Lower leg skin (tissue), 4 donors: ENCODE measurements at regions of chr11 and their contacts with region 1.

Region 1: DNA sequence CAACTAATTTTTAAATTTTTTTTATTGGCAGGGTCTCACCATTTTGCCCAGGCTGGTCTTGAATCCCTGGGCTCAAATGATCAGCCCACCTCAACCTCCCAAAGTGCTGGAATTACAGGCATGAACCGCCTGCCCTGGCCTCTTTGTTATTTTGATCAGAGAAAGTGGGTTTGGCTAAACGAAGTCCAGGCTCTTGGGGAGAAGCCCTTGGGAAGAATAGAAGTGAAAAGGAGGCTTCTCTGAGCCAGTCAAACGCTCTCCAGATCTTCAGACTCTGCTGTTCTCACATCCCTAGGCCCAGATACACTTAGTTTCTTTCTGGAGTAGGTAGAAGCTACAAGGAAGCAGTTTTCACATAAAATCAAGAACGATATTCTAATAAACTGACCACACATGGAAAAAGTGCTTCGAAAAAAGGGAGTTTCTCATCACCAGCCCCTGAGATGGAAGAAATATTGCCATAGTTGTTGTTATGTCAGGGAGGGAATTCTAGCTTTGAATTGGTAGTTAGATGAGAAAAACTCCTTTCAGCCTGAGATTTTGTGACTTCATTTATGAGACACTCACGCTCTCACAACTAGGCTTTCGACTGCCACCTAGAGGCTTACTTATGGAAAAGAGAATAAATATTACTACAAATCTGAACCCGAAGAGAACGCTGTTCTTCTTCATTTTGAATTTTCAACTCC is 41.7 kb upstream of the AQP11 start:
- DNase-seq: peak in 1 of 2 donors; percentile 18
- H3K4me3 ChIP-seq: no peak overlapping the region
- CTCF ChIP-seq: no peak
- POLR2A ChIP-seq: no peak

Region 2: GRCh38 chr11:77127232-77127911 is 420.6 kb before region 1 on chr11:
- intact Hi-C with region 1: loop called (anchors 10 kb)
- DNase-seq: peak in 1 of 2 donors; percentile 90
- H3K4me3 ChIP-seq: no peak overlapping the region
- CTCF ChIP-seq: peak in 1 of 3 donors; percentile 92
- POLR2A ChIP-seq: no peak